HepG2 (cell line): ENCODE measurements at regions of chr3 and their contacts with region 1.

Region 1: DNA sequence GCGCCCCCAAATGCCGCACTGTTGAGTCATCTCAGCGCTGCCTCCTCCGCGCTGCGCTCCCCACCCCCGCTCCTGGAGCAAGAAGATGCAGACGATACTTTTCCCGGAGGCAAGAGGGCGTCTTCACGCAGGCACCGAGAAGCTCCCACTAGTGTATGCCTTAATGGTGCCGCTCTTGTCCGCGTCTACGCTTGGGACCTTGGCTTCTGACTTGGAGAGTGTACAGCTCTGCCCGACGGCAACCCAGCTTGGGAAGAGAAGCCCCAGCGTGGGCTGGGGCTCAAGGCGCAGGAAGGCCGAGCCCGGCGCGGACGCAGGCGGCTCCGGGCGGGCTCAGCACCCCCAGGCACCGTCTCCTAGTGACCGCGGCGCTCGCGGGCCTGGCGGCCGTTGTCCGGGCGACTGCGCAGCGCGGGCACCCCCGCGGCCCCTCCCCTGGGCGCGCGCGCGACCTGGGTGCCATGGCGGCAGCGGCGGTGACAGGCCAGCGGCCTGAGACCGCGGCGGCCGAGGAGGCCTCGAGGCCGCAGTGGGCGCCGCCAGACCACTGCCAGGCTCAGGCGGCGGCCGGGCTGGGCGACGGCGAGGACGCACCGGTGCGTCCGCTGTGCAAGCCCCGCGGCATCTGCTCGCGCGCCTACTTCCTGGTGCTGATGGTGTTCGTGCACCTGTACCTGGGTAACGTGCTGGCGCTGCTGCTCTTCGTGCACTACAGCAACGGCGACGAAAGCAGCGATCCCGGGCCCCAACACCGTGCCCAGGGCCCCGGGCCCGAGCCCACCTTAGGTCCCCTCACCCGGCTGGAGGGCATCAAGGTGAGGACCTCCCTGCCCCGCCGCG is at the start of gene P4HTM:
- DNase-seq: no peak
- ATAC-seq: no peak
- H3K4me3 ChIP-seq: no peak within 1 kb of the TSS
- H3K27ac ChIP-seq: no peak within 1 kb of the TSS
- H3K4me1 ChIP-seq: no peaks in the 10 kb centered on the region
- H3K27me3 ChIP-seq: no peaks in the 10 kb centered on the region
- CTCF ChIP-seq: no peak
- EP300 ChIP-seq: no peak
- POLR2A ChIP-seq: no peak
- RAD21 ChIP-seq: no peak
- total RNA-seq, gene P4HTM: not detected in 2 replicates

Region 2: DNA sequence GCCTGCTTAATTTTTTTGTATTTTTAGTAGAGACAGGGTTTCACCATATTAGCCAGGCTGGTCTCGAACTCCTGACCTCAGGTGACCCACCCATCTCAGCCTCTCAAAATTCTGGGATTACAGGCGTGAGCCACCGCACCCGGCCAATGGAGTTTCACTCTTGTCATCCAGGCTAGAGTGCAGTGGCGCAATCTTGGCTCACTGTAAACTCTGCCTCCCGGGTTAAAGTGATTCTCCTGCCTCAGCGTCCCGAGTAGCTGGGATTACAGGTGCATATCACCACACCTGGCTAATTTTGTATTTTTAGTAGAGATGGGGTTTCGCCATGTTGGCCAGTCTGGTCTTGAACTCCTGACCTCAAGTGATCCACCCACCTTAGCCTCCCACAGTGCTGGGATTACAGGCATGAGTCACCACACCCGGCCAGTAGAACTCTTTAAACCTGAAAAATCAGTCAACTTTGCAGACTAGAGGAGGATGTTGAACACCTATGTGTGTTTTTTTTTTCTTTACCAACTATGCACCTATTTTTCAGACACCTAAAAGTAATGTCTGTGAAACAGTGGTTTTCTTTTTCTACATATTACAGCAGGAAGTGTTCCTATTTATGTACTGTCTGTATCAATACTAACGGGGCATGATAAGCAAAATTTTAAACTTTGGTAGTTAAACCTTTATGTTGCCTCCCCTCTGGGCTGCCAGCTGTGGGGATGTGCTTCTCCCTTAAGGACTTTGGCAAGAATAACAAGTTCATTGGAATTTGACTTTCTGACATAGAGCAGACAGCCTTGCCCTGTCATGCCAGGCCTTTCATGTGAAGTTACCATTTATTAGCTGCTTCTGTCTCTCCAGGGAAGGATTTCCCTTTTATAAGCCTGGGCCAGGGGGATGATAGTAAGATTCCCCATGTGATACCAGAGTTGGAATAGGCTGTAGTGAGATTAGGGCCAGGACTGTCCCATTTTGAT is 63.3 kb before region 1 on chr3:
- CTCF ChIA-PET with region 1: no interaction called
- POLR2A ChIA-PET with region 1: no interaction called
- in situ Hi-C with region 1: no loop called
- intact Hi-C with region 1: no loop called
- DNase-seq: no peak
- ATAC-seq: no peak
- H3K4me3 ChIP-seq: no peak overlapping the region
- H3K27ac ChIP-seq: no peak overlapping the region
- H3K4me1 ChIP-seq: peaks cover 23% of the 10 kb centered on the region
- H3K27me3 ChIP-seq: no peaks in the 10 kb centered on the region
- CTCF ChIP-seq: no peak
- EP300 ChIP-seq: no peak
- POLR2A ChIP-seq: no peak
- RAD21 ChIP-seq: no peak

Region 3: GRCh38 chr3:48952510-48953118 is 37.4 kb before region 1 on chr3:
- CTCF ChIA-PET with region 1: no interaction called
- POLR2A ChIA-PET with region 1: no interaction called
- in situ Hi-C with region 1: no loop called
- intact Hi-C with region 1: no loop called
- DNase-seq: peak; percentile 45
- ATAC-seq: peak; percentile 85
- H3K4me3 ChIP-seq: no peak overlapping the region
- H3K27ac ChIP-seq: no peak overlapping the region
- H3K4me1 ChIP-seq: no peaks in the 10 kb centered on the region
- H3K27me3 ChIP-seq: no peaks in the 10 kb centered on the region
- CTCF ChIP-seq: peak; percentile 80
- EP300 ChIP-seq: no peak
- POLR2A ChIP-seq: no peak
- RAD21 ChIP-seq: no peak

Region 4: GRCh38 chr3:49013755-49014628 is 24.0 kb after region 1 on chr3:
- CTCF ChIA-PET with region 1: interaction called, 12 read pairs
- POLR2A ChIA-PET with region 1: interaction called, 6 read pairs
- in situ Hi-C with region 1: no loop called
- intact Hi-C with region 1: loop called (anchors 2 kb)
- DNase-seq: peak; percentile 59
- ATAC-seq: peak; percentile 68
- H3K4me3 ChIP-seq: no peak overlapping the region
- H3K27ac ChIP-seq: no peak overlapping the region
- H3K4me1 ChIP-seq: peaks cover 15% of the 10 kb centered on the region
- H3K27me3 ChIP-seq: no peaks in the 10 kb centered on the region
- CTCF ChIP-seq: peak; percentile 67
- EP300 ChIP-seq: no peak
- POLR2A ChIP-seq: peak in 1 of 2 experiments; percentile 38; a peak in 1 of 4 replicates
- RAD21 ChIP-seq: peak; percentile 63

Region 5: DNA sequence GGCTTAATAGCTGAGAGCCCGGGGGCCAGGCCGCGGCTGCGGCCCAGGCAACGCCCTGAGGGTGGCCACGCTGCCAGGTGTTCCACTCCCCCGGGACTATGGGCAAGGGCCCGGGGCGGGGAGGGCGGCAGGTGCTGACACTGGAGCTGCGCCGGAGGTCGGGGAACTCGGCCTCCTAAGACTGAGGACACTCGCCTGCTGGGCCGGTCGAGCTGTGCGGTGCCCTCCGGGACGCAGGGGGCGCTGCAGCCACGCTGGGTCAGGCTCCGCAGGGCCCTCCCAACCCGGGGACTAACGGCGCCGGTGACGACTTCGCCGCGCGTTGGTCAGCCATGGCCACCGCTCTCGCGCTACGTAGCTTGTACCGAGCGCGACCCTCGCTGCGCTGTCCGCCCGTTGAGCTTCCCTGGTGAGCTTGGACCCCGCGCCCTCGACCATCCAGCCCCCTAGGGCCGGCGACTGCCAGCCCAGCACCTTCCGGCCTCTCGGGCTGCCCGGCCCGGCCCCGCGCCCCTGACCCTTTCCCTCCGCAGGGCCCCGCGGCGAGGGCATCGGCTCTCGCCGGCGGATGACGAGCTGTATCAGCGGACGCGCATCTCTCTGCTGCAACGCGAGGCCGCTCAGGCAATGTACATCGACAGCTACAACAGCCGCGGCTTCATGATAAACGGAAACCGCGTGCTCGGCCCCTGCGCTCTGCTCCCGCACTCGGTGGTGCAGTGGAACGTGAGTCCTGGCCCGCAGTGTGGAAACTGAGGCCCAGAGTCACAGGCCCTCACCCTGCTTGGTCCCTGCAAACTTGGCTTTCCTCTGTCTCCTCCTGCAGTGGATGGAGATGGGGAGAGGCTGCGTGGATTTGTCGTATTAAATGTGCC is 32.0 kb after region 1 on chr3 and contains the start of gene NDUFAF3:
- CTCF ChIA-PET with region 1: no interaction called
- POLR2A ChIA-PET with region 1: interaction called, 24 read pairs
- in situ Hi-C with region 1: no loop called
- intact Hi-C with region 1: no loop called
- DNase-seq: peak; percentile 85
- ATAC-seq: peak; percentile 72
- H3K4me3 ChIP-seq: peak within 1 kb of the TSS; percentile 80 to 96 (median 89)
- H3K27ac ChIP-seq: peak within 1 kb of the TSS; percentile 99
- H3K4me1 ChIP-seq: peaks cover 50% of the 10 kb centered on the region
- H3K27me3 ChIP-seq: no peaks in the 10 kb centered on the region; a peak in 1 of 5 replicates
- CTCF ChIP-seq: peak; percentile 97
- EP300 ChIP-seq: peak in 1 of 2 experiments; percentile 8; a peak in 1 of 4 replicates
- POLR2A ChIP-seq: peak in 1 of 2 experiments; percentile 95; a peak in 2 of 4 replicates
- RAD21 ChIP-seq: peak; percentile 57
- total RNA-seq, gene NDUFAF3: 50.0 and 51.9 TPM in 2 replicates

Region 6: DNA sequence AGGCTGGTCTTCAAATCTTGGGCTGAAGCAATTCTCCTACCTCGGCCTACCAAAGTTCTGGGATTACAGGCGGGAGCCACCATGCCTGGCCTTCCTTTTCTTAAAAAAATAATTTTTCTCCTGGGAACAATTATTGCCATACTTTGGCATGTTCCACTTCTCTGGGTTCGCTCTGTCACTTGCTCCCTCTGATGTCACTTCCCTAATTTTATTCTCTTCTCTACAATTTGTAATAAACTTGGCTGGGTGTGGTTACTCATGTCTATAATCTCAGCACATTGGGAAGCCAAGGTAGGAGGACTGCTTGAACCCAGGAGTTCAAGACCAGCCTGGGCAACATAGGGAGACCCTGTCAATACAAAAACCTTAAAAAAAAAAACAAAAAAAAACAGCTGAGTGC is 45.3 kb after region 1 on chr3:
- CTCF ChIA-PET with region 1: no interaction called
- POLR2A ChIA-PET with region 1: no interaction called
- in situ Hi-C with region 1: no loop called
- intact Hi-C with region 1: no loop called
- DNase-seq: no peak
- ATAC-seq: no peak
- H3K4me3 ChIP-seq: no peak overlapping the region
- H3K27ac ChIP-seq: no peak overlapping the region
- H3K4me1 ChIP-seq: no peaks in the 10 kb centered on the region
- H3K27me3 ChIP-seq: no peaks in the 10 kb centered on the region
- CTCF ChIP-seq: no peak
- EP300 ChIP-seq: no peak
- POLR2A ChIP-seq: no peak
- RAD21 ChIP-seq: no peak

Region 7: DNA sequence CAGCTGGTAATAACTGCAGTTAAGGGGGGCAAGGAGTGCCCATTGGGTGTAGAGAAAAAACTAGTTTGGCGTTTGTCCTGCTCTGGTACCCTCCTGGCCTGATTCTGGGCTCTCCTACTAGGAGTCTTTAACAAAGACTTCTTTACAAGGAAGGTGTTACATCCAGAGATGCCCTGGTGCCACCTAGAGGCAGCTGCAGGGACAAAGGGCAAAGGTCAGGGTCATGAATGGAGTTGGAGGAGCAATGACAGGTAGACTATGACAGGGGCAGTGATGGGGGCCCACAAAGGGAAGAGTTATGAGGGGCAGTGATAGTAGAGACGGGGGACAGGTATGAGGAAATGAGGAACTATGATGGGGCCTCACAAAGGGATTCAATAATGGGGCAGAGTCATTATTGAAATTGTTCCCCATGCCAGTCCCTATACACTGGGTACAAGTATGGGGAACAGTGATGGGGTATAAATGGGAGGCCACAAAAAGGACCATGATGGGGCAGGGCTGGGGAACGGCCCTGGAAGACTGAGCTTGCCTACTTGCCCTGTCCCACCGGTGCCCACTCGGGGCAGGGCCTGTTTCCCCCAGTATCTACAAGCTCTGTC is 168.2 kb after region 1 on chr3:
- CTCF ChIA-PET with region 1: interaction called, 4 read pairs
- POLR2A ChIA-PET with region 1: interaction called, 3 read pairs
- in situ Hi-C with region 1: no loop called
- intact Hi-C with region 1: loop called (anchors 5 kb)
- DNase-seq: peak; percentile 74
- ATAC-seq: peak; percentile 68
- H3K4me3 ChIP-seq: no peak overlapping the region
- H3K27ac ChIP-seq: no peak overlapping the region
- H3K4me1 ChIP-seq: peaks cover 14% of the 10 kb centered on the region
- H3K27me3 ChIP-seq: no peaks in the 10 kb centered on the region
- CTCF ChIP-seq: peak; percentile 86
- EP300 ChIP-seq: peak in 1 of 2 experiments; percentile 27; a peak in 1 of 4 replicates
- POLR2A ChIP-seq: no peak
- RAD21 ChIP-seq: peak; percentile 56; the same call in 1 of the 2 replicates